ENCODE measurements at regions of chr4 and their contacts with region 1.

Region 1: GRCh38 chr4:26410385-26411293 is 79.6 kb downstream of the CCKAR start:
- DNase-seq: peak in 4 of 5 donors; percentile 51 to 63 (median 58)
- H3K4me3 ChIP-seq: no peak overlapping the region
- H3K4me3 Mint-ChIP-seq: no peak overlapping the region
- H3K27ac ChIP-seq: no peak overlapping the region
- H3K27ac Mint-ChIP-seq: no peak overlapping the region
- H3K4me1 ChIP-seq: no peaks in the 10 kb centered on the region
- H3K4me1 Mint-ChIP-seq: peaks cover 0 to 3% (median 0%) of the 10 kb centered on the region in 4 donors
- H3K27me3 ChIP-seq: no peaks in the 10 kb centered on the region
- H3K27me3 Mint-ChIP-seq: no peaks in the 10 kb centered on the region

Region 2: GRCh38 chr4:25925486-25926201 is 485.0 kb before region 1 on chr4:
- CTCF ChIA-PET with region 1: no interaction called
- POLR2A ChIA-PET with region 1: interaction called, 3 read pairs
- intact Hi-C with region 1: loop called (anchors 5 kb)
- DNase-seq: peak in 1 of 5 donors; percentile 11
- H3K4me3 ChIP-seq: no peak overlapping the region
- H3K4me3 Mint-ChIP-seq: no peak overlapping the region
- H3K27ac ChIP-seq: no peak overlapping the region
- H3K27ac Mint-ChIP-seq: no peak overlapping the region
- H3K4me1 ChIP-seq: peaks cover 5% of the 10 kb centered on the region
- H3K4me1 Mint-ChIP-seq: peaks cover 1 to 4% (median 3%) of the 10 kb centered on the region in 4 donors
- H3K27me3 ChIP-seq: no peaks in the 10 kb centered on the region
- H3K27me3 Mint-ChIP-seq: no peaks in the 10 kb centered on the region

Region 3: DNA sequence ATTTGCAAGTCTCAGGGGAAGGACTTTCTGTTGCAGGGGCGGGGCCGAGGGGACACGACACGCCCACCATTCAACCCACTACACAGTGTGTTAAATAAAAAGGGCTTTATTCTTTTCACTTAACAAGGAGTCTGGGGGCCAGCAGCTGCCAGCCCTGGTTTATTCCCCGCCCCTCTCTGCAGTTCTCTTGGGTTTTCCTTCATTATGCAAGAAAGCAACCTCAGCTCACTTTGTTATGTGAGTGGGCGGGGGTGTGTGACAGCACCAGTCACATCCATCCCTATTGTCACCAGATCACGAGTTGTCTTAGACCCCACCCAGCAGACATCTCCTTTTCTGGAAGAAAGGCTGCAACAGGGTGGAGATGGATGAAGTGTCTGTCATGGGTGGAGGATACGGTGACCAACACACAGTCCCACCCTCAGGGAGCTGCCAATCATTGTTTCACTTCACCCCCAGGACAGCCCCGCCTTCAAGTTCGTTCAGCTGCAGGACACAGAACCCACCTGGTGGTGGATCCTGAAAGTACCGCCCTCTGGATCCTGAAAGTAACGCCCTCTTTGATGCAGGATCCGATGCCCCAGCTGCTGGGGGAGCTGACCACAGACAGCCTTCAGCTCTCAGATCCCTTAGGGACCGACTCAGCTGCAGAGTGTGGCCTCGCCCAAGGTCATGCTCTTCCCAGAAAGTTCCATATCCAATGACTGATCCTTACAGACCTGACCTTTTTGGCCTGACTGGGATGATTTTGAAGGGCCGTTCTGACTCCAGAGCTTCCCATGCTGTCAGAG is 417.0 kb before region 1 on chr4:
- CTCF ChIA-PET with region 1: interaction called, 57 read pairs
- POLR2A ChIA-PET with region 1: no interaction called
- intact Hi-C with region 1: loop called (anchors 1 kb)
- DNase-seq: no peak
- H3K4me3 ChIP-seq: no peak overlapping the region
- H3K4me3 Mint-ChIP-seq: no peak overlapping the region
- H3K27ac ChIP-seq: no peak overlapping the region
- H3K27ac Mint-ChIP-seq: no peak overlapping the region
- H3K4me1 ChIP-seq: no peaks in the 10 kb centered on the region
- H3K4me1 Mint-ChIP-seq: peaks cover 1 to 8% (median 3%) of the 10 kb centered on the region in 4 donors
- H3K27me3 ChIP-seq: no peaks in the 10 kb centered on the region
- H3K27me3 Mint-ChIP-seq: no peaks in the 10 kb centered on the region

Region 4: DNA sequence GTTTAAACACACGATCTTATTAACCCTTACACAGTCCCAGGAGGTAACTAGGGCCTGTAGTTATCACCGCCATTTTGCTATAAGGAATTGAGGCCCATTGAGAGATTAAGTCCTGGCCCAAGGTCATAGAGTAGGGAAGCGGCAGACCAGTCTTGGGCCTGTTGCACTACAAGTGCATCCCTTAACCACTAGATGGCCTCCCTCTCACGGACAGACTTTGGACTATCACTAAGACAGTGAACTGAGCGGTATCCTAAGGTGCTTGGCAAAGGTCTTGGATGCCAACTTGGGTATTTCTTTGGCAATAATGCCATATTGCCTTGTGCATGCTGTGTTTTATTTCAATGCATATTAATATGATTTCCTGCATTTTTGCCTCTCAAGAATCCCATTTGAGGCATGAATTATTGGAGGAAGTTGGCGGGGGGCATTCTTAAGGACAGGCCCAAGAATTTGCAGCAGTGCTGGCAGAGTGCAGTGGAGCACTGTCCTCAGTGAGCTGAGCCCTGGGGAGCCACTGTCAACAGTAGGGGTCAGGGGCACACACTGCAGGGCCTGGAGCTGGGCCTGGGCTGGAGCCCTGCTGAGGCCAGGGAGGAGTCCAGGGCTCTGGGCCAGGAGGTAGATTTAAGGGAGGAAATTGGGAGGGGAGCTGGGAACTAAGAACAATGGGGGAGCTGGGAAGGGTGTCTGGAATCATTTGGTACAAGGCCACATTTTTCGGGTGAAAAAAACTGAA is 349.2 kb before region 1 on chr4:
- CTCF ChIA-PET with region 1: interaction called, 31 read pairs
- POLR2A ChIA-PET with region 1: no interaction called
- intact Hi-C with region 1: loop called (anchors 1 kb)
- DNase-seq: peak in 4 of 5 donors; percentile 15 to 26 (median 16)
- H3K4me3 ChIP-seq: no peak overlapping the region
- H3K4me3 Mint-ChIP-seq: no peak overlapping the region
- H3K27ac ChIP-seq: no peak overlapping the region
- H3K27ac Mint-ChIP-seq: no peak overlapping the region
- H3K4me1 ChIP-seq: no peaks in the 10 kb centered on the region
- H3K4me1 Mint-ChIP-seq: peaks cover 2 to 8% (median 7%) of the 10 kb centered on the region in 4 donors
- H3K27me3 ChIP-seq: no peaks in the 10 kb centered on the region
- H3K27me3 Mint-ChIP-seq: no peaks in the 10 kb centered on the region

Region 5: DNA sequence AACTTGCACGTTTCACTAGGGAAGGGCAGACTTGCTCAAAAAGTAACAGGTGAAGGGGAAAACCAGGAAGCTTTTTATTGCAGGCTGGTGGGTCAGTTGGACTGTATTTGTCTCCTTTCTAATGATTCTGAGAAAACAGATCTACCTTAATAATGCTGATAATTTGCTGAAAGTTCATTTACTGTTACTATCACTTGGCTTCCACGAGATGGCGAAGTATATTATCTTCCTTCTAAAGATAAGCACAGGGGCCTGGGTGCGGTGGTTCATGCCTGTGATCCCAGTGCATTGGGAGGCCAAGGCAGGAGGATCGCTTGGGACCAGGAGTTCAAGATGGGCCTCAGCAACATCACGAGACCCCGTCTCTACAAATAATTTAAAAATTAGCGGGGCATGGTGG is 63.3 kb after region 1 on chr4:
- CTCF ChIA-PET with region 1: no interaction called
- POLR2A ChIA-PET with region 1: no interaction called
- intact Hi-C with region 1: no loop called
- DNase-seq: no peak
- H3K4me3 ChIP-seq: no peak overlapping the region
- H3K4me3 Mint-ChIP-seq: no peak overlapping the region
- H3K27ac ChIP-seq: no peak overlapping the region
- H3K27ac Mint-ChIP-seq: no peak overlapping the region
- H3K4me1 ChIP-seq: no peaks in the 10 kb centered on the region
- H3K4me1 Mint-ChIP-seq: no peaks in the 10 kb centered on the region
- H3K27me3 ChIP-seq: no peaks in the 10 kb centered on the region
- H3K27me3 Mint-ChIP-seq: peaks cover 2 to 12% of the 10 kb centered on the region in 2 donors

Region 6: DNA sequence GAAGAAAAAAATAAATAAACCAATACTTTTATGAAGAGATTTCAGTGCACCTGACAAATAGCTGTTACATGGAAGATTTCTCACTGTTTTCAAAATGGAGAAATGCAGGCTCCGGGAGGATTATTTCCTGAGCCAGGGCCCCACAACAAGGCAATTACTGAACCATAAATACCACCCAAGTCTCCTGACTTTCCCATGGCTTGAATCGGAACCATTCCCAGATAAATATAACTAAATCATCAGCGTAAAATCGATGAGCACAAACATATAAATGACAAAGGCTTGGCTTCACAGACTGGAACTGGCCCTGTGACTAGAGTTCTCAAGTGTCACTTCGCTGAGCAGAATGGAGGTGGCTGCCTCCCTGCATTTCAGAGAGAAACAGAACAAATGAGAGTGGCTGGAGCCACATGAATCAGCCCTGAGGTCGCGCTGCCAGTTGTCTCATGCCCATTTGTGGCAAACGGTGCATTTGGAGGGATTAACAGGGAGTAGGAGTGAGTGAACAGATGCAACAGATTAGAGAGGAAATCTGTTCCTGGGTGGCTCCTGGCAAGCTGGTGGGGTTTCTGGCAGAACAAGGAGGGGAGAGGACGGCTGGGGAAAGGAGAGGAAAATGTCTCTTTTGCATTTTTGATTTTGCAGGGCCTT is 392.7 kb after region 1 on chr4:
- CTCF ChIA-PET with region 1: no interaction called
- POLR2A ChIA-PET with region 1: no interaction called
- intact Hi-C with region 1: no loop called
- DNase-seq: no peak
- H3K4me3 ChIP-seq: no peak overlapping the region
- H3K4me3 Mint-ChIP-seq: no peak overlapping the region
- H3K27ac ChIP-seq: no peak overlapping the region
- H3K27ac Mint-ChIP-seq: peak overlapping the region in 3 of 7 donors; percentile 44 to 72 (median 61)
- H3K4me1 ChIP-seq: no peaks in the 10 kb centered on the region
- H3K4me1 Mint-ChIP-seq: peaks cover 0 to 1% (median 0%) of the 10 kb centered on the region in 4 donors
- H3K27me3 ChIP-seq: no peaks in the 10 kb centered on the region
- H3K27me3 Mint-ChIP-seq: no peaks in the 10 kb centered on the region

Region 7: GRCh38 chr4:27010334-27010940 is 599.8 kb after region 1 on chr4:
- CTCF ChIA-PET with region 1: interaction called, 3 read pairs
- POLR2A ChIA-PET with region 1: no interaction called
- intact Hi-C with region 1: loop called (anchors 2 kb)
- DNase-seq: peak; percentile 50 to 59 (median 57)
- H3K4me3 ChIP-seq: no peak overlapping the region
- H3K4me3 Mint-ChIP-seq: no peak overlapping the region
- H3K27ac ChIP-seq: no peak overlapping the region
- H3K27ac Mint-ChIP-seq: peak overlapping the region in 6 of 7 donors; percentile 4 to 69 (median 63)
- H3K4me1 ChIP-seq: no peaks in the 10 kb centered on the region
- H3K4me1 Mint-ChIP-seq: peaks cover 4 to 17% (median 11%) of the 10 kb centered on the region in 4 donors
- H3K27me3 ChIP-seq: no peaks in the 10 kb centered on the region
- H3K27me3 Mint-ChIP-seq: no peaks in the 10 kb centered on the region

Measured in CD4-positive, alpha-beta memory T cell (primary cell).